ENCODE measurements at regions of chr1 and their contacts with region 1.

Region 1: DNA sequence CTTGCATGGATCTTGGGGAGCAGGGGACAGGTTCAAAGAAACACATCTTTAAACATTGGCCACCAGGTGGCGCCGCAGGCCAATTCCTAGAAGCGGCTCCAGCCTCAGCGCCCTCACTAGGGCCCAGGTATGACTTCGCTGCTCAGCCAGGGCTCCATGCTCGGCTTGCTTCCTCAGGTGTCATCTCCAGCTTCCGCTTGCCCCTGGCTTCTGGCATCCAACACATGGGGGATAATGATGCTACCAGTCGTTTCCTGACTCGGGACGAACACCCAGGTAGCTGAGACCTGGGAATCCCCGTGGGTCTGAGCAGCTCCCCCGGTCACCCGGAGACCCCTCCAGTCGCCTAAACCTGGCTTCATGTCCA is 8.5 kb upstream of the MEX3A start:
- DNase-seq: peak; percentile 83 to 92 (median 90)
- H3K4me3 ChIP-seq: no peak overlapping the region
- H3K27ac ChIP-seq: no peak overlapping the region
- H3K4me1 ChIP-seq: no peaks in the 10 kb centered on the region
- H3K27me3 ChIP-seq: no peaks in the 10 kb centered on the region
- CTCF ChIP-seq: peak; percentile 88 to 92 (median 89)
- EP300 ChIP-seq: no peak
- POLR2A ChIP-seq: no peak

Region 2: GRCh38 chr1:156136970-156137483 is 46.2 kb after region 1 on chr1:
- intact Hi-C with region 1: loop called in 2 of 4 experiments (anchors 2 kb)
- DNase-seq: no peak
- H3K4me3 ChIP-seq: no peak overlapping the region
- H3K27ac ChIP-seq: no peak overlapping the region
- H3K4me1 ChIP-seq: peaks cover 3% of the 10 kb centered on the region
- H3K27me3 ChIP-seq: no peaks in the 10 kb centered on the region
- CTCF ChIP-seq: no peak
- EP300 ChIP-seq: no peak
- POLR2A ChIP-seq: no peak

Region 3: DNA sequence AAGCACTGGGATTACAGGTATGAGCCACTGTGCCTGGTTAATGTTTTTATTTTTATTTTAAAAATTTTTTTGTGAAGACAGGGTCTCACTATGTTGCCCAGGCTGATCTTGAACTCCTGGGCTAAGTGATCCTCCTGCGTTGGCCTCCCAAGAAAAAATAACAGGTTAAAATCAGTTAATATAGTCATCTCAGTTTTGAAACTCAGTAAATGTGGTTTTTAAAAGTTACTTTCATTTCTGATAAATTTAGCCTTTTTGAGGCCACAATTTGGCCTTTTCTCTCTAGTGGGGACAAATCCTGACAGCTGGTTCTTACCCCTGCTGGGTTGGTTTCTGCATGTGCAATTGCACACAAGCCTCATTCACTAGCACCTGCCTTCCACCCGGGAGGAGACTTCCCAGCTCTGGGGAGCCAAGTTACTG is 135.3 kb after region 1 on chr1:
- intact Hi-C with region 1: loop called (anchors 1 to 5 kb)
- DNase-seq: no peak
- H3K4me3 ChIP-seq: no peak overlapping the region
- H3K27ac ChIP-seq: no peak overlapping the region
- H3K4me1 ChIP-seq: no peaks in the 10 kb centered on the region
- H3K27me3 ChIP-seq: no peaks in the 10 kb centered on the region
- CTCF ChIP-seq: no peak
- EP300 ChIP-seq: no peak
- POLR2A ChIP-seq: no peak

Region 4: GRCh38 chr1:156233426-156234127 is 142.8 kb after region 1 on chr1:
- intact Hi-C with region 1: loop called in 2 of 4 experiments (anchors 5 kb)
- DNase-seq: no peak
- H3K4me3 ChIP-seq: no peak overlapping the region
- H3K27ac ChIP-seq: no peak overlapping the region
- H3K4me1 ChIP-seq: no peaks in the 10 kb centered on the region
- H3K27me3 ChIP-seq: no peaks in the 10 kb centered on the region
- CTCF ChIP-seq: no peak
- EP300 ChIP-seq: no peak
- POLR2A ChIP-seq: no peak